Aorta (tissue), 5 donors: ENCODE measurements at regions of chr17 and their contacts with region 1.

Region 1: DNA sequence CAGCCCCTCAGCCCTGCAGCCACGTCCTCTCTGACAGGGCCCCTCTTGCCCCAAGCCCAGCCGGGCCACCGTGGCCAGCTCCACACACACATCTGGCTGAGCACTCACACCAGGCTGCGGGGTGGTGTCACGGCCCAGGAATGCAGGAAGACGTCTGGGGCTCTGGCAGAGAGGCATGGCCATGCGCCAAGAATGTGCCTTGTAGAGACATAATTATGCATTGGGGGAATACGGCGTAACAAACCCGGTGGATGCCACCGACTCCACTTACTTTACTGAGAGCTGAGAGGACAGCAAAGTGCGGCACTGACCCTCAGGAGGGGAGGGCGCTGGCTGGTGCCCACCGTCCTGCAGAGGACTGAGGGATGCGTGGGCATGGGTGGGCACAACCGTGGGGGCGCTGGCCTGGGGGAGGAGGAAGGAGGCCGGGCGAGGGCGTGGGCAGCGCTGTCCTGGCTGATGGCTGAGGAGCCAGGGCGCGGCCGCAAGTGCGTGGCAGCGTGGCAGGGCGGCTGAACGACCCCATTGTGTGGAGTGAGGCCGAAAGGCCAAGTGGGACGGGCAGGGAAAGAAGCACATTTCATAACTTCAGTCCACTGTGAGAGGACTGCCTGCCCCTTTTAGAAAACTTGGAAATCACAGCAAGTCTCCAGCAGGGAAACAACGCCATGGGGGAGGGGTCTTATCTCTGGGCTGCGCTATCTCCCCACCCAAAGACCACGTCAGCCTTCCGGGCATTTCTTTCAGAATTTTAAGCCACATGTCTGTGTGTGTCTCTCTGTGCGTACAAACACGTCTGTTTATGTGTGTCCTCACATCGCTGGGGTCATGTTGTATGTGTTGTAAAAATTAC is 30.6 kb downstream of the METRNL start:
- DNase-seq: peak; percentile 97 to 99
- ATAC-seq: peak; percentile 86
- H3K4me3 ChIP-seq: peak overlapping the region in 1 of 2 donors; percentile 24
- H3K27ac ChIP-seq: peak overlapping the region; percentile 38 to 72
- H3K4me1 ChIP-seq: no peaks in the 10 kb centered on the region
- H3K27me3 ChIP-seq: no peaks in the 10 kb centered on the region

Region 2: DNA sequence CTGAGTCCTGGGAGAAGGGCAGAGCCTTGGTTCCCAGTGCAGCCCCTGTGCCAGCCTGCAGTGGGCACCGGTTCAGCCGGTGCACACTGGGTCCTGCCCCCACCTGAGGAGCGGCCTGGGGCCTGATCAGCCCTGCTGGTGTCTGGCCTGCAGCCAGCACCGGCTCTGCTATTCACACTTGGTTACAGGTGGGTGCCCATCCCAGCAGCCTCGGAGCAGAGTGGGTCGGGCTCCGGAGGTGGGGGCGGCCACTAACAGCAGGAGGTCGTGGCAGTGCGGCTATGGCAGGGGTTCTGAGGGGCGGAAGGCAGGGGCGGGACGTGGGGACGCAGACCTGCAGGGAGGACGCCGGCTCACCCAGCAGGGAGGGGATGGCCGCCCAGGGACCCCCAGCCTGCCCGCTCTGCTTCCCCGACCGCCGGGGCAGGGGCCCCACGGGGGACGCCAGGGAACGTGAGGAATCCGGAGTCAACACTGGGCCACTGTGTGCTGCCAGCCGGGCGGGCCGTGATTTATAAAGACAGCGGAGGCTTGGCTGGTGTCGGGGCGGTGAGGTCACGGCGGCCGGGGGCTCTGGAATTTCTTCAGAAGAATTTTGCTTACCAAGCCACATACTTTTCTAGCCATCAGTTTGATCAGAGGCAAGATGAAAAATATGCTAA is 10.3 kb before region 1 on chr17:
- intact Hi-C with region 1: loop called in 1 of 2 experiments (anchors 1 kb)
- DNase-seq: peak; percentile 90 to 94
- ATAC-seq: peak; percentile 66
- H3K4me3 ChIP-seq: peak overlapping the region in 1 of 2 donors; percentile 23
- H3K27ac ChIP-seq: peak overlapping the region; percentile 62 to 93
- H3K4me1 ChIP-seq: peaks cover 2 to 3% of the 10 kb centered on the region in 2 donors
- H3K27me3 ChIP-seq: no peaks in the 10 kb centered on the region